WTC11 (cell line): ENCODE measurements at regions of chr17 and their contacts with region 1.

Region 1: GRCh38 chr17:49031965-49032928 is 35.1 kb downstream of the IGF2BP1 start:
- DNase-seq: peak; percentile 46
- ATAC-seq: peak; percentile 34
- H3K4me3 Mint-ChIP-seq: no peak overlapping the region
- H3K27ac Mint-ChIP-seq: peak overlapping the region; percentile 95
- H3K4me1 Mint-ChIP-seq: peaks cover 29% of the 10 kb centered on the region
- H3K27me3 Mint-ChIP-seq: no peaks in the 10 kb centered on the region
- CTCF ChIP-seq: peak; percentile 73

Region 2: GRCh38 chr17:48908047-48908843 is 124.0 kb before region 1 on chr17 and contains the start of gene UBE2Z:
- CTCF ChIA-PET with region 1: interaction called, 10 read pairs
- POLR2A ChIA-PET with region 1: no interaction called
- DNase-seq: peak; percentile 93
- ATAC-seq: peak; percentile 90
- H3K4me3 Mint-ChIP-seq: peak within 1 kb of the TSS; percentile 100
- H3K27ac Mint-ChIP-seq: peak within 1 kb of the TSS; percentile 99
- H3K4me1 Mint-ChIP-seq: peaks cover 31% of the 10 kb centered on the region
- H3K27me3 Mint-ChIP-seq: no peaks in the 10 kb centered on the region
- CTCF ChIP-seq: no peak
- total RNA-seq, gene UBE2Z: 65.1 to 69.7 TPM (median 68.4 TPM) in 3 replicates

Region 3: GRCh38 chr17:48954300-48954755 is 77.9 kb before region 1 on chr17:
- CTCF ChIA-PET with region 1: interaction called, 47 read pairs
- POLR2A ChIA-PET with region 1: no interaction called
- DNase-seq: peak; percentile 68
- ATAC-seq: peak; percentile 93
- H3K4me3 Mint-ChIP-seq: no peak overlapping the region
- H3K27ac Mint-ChIP-seq: peak overlapping the region; percentile 49; the same call in 1 of the 2 replicates
- H3K4me1 Mint-ChIP-seq: peaks cover 11% of the 10 kb centered on the region
- H3K27me3 Mint-ChIP-seq: no peaks in the 10 kb centered on the region
- CTCF ChIP-seq: no peak

Region 4: GRCh38 chr17:48970224-48970623 is 62.0 kb before region 1 on chr17:
- CTCF ChIA-PET with region 1: interaction called, 11 read pairs
- POLR2A ChIA-PET with region 1: no interaction called
- DNase-seq: no peak
- ATAC-seq: no peak
- H3K4me3 Mint-ChIP-seq: no peak overlapping the region
- H3K27ac Mint-ChIP-seq: no peak overlapping the region
- H3K4me1 Mint-ChIP-seq: peaks cover 32% of the 10 kb centered on the region
- H3K27me3 Mint-ChIP-seq: peaks cover 13% of the 10 kb centered on the region
- CTCF ChIP-seq: no peak

Region 5: DNA sequence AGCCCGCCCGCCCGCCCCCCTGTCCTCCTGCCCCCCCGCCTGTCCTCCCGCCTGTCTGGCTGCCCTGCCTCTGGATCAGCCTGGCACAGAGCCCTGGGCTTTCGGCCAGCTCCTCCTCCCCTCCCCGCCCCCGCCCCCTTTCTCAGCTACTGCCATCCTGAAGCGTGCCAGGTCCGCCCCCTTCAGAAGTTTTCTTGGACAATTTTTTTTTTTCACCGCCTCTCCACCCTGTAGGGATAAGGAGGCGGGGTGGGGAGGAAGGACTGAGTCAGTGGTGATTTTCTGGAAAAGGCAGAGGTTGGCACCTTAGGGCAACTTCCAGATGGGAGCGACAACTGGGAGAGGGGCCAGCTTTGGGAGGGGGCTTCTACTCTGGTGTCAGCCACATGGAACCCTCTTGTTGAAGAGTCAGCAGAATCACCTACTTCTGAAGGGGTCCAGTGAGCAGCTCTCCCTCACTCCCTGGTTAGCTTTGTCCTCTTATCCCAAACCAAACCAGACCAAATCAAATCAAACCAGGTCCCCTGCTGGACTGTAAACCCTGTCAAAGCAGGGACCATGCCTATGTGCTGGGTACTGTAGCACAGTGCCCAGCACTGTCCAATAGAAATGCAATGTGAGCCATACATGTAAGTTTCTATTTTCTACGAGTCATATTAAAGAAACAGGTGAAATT is 15.3 kb before region 1 on chr17:
- CTCF ChIA-PET with region 1: interaction called, 182 read pairs
- POLR2A ChIA-PET with region 1: interaction called, 9 read pairs
- DNase-seq: no peak
- ATAC-seq: no peak
- H3K4me3 Mint-ChIP-seq: peak overlapping the region; percentile 3; the same call in 1 of the 2 replicates
- H3K27ac Mint-ChIP-seq: peak overlapping the region; percentile 72
- H3K4me1 Mint-ChIP-seq: peaks cover 76% of the 10 kb centered on the region
- H3K27me3 Mint-ChIP-seq: no peaks in the 10 kb centered on the region
- CTCF ChIP-seq: no peak

Region 6: DNA sequence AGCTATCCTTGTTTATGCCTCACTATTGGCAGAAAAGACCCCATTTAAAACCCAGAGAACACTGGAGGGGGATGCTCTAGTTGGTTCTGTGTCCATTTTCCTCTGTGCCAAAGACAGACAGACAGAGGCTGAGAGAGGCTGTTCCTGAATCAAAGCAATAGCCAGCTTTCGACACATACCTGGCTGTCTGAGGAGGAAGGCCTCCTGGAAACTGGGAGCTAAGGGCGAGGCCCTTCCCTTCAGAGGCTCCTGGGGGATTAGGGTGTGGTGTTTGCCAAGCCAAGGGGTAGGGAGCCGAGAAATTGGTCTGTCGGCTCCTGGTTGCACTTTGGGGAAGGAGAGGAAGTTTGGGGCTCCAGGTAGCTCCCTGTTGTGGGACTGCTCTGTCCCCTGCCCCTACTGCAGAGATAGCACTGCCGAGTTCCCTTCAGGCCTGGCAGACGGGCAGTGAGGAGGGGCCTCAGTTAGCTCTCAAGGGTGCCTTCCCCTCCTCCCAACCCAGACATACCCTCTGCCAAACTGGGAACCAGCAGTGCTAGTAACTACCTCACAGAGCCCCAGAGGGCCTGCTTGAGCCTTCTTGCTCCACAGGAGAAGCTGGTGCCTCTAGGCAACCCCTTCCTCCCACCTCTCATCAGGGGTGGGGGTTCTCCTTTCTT is 21.1 kb after region 1 on chr17:
- CTCF ChIA-PET with region 1: interaction called, 26 read pairs
- POLR2A ChIA-PET with region 1: interaction called, 5 read pairs
- DNase-seq: peak; percentile 26
- ATAC-seq: peak; percentile 53
- H3K4me3 Mint-ChIP-seq: 0 out of 2 replicates have a peak overlapping the region, but pooled peaks have one; percentile 19
- H3K27ac Mint-ChIP-seq: peak overlapping the region; percentile 91
- H3K4me1 Mint-ChIP-seq: peaks cover 44% of the 10 kb centered on the region
- H3K27me3 Mint-ChIP-seq: no peaks in the 10 kb centered on the region
- CTCF ChIP-seq: no peak

Region 7: DNA sequence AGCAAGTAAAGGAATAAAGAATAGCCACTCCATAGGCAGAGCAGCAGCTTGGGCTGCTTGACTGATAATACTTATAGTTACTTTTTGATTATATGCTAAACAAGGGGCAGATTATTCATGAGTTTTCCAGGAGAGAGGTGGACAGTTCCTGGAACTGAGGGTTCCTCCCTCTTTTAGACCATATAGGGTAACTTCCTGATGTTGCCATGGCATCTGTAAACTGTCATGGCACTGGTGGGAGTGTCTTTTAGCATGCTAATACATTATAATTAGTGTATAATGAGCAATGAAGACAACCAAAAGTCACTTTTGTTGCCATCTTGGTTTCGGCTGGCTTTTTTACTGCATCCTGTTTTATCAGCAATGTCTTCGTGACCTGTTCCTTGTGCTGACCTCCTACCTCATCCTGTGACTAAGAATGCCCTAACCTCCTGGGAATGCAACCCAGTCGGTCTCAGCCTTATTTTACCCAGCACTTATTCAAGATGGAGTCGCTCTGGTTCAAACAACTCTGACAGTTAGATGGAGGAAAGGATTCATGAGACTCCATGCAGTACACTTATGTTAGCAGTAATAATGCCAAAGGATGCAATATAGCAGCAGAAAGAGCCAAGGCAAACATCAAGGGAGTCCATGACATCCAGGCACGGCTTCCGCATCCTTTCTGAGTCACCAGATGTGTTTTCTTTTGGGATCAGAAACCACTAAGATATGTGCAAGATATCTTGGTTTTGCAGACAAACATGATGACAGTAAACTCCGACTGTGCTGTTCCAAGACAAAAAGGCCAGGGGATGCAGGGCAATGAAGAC is 44.5 kb after region 1 on chr17:
- CTCF ChIA-PET with region 1: no interaction called
- POLR2A ChIA-PET with region 1: no interaction called
- DNase-seq: no peak
- ATAC-seq: no peak
- H3K4me3 Mint-ChIP-seq: no peak overlapping the region
- H3K27ac Mint-ChIP-seq: no peak overlapping the region
- H3K4me1 Mint-ChIP-seq: peaks cover 2% of the 10 kb centered on the region; the same call in 1 of the 2 replicates
- H3K27me3 Mint-ChIP-seq: no peaks in the 10 kb centered on the region; the same call in none of the 2 replicates
- CTCF ChIP-seq: no peak

Region 8: GRCh38 chr17:49089131-49089530 is 56.9 kb after region 1 on chr17:
- CTCF ChIA-PET with region 1: no interaction called
- POLR2A ChIA-PET with region 1: no interaction called
- DNase-seq: no peak
- ATAC-seq: no peak
- H3K4me3 Mint-ChIP-seq: no peak overlapping the region
- H3K27ac Mint-ChIP-seq: no peak overlapping the region
- H3K4me1 Mint-ChIP-seq: peaks cover 24% of the 10 kb centered on the region
- H3K27me3 Mint-ChIP-seq: no peaks in the 10 kb centered on the region
- CTCF ChIP-seq: no peak

Region 9: GRCh38 chr17:49132699-49133364 is 100.6 kb after region 1 on chr17 and contains the start of gene B4GALNT2:
- CTCF ChIA-PET with region 1: no interaction called
- POLR2A ChIA-PET with region 1: no interaction called
- DNase-seq: peak; percentile 64
- ATAC-seq: peak; percentile 92
- H3K4me3 Mint-ChIP-seq: peak within 1 kb of the TSS; percentile 68
- H3K27ac Mint-ChIP-seq: no peak within 1 kb of the TSS
- H3K4me1 Mint-ChIP-seq: 0 out of 2 replicates have a peak, but pooled peaks cover 2% of the 10 kb centered on the region
- H3K27me3 Mint-ChIP-seq: peaks cover 77% of the 10 kb centered on the region
- CTCF ChIP-seq: no peak
- total RNA-seq, gene B4GALNT2: 0.02 to 0.04 TPM (median 0.02 TPM) in 3 replicates